BJ (cell line): ENCODE measurements at regions of chr14 and their contacts with region 1.

Region 1: GRCh38 chr14:24431569-24432258 is 2.0 kb downstream of the KHNYN start:
- DNase-seq: peak; percentile 40
- H3K4me3 ChIP-seq: peak overlapping the region; percentile 58
- H3K27me3 ChIP-seq: no peaks in the 10 kb centered on the region
- CTCF ChIP-seq: peak; percentile 96

Region 2: GRCh38 chr14:24310646-24311604 is 120.8 kb before region 1 on chr14 and contains the start of gene LTB4R:
- CTCF ChIA-PET with region 1: interaction called, 21 read pairs
- POLR2A ChIA-PET with region 1: interaction called, 3 read pairs
- DNase-seq: no peak
- H3K4me3 ChIP-seq: peak within 1 kb of the TSS; percentile 25
- H3K27me3 ChIP-seq: no peaks in the 10 kb centered on the region
- CTCF ChIP-seq: peak; percentile 33
- polyA plus RNA-seq, gene LTB4R: 2.5 and 2.6 TPM in 2 replicates

Region 3: GRCh38 chr14:24351517-24351916 is 80.2 kb before region 1 on chr14:
- CTCF ChIA-PET with region 1: interaction called, 31 read pairs
- POLR2A ChIA-PET with region 1: no interaction called
- DNase-seq: no peak
- H3K4me3 ChIP-seq: no peak overlapping the region
- H3K27me3 ChIP-seq: peaks cover 6% of the 10 kb centered on the region; the same call in 1 of the 2 replicates
- CTCF ChIP-seq: peak; percentile 18

Region 4: GRCh38 chr14:24372701-24373416 is 58.9 kb before region 1 on chr14:
- CTCF ChIA-PET with region 1: interaction called, 59 read pairs
- POLR2A ChIA-PET with region 1: no interaction called
- DNase-seq: no peak
- H3K4me3 ChIP-seq: no peak overlapping the region
- H3K27me3 ChIP-seq: no peaks in the 10 kb centered on the region
- CTCF ChIP-seq: no peak

Region 5: DNA sequence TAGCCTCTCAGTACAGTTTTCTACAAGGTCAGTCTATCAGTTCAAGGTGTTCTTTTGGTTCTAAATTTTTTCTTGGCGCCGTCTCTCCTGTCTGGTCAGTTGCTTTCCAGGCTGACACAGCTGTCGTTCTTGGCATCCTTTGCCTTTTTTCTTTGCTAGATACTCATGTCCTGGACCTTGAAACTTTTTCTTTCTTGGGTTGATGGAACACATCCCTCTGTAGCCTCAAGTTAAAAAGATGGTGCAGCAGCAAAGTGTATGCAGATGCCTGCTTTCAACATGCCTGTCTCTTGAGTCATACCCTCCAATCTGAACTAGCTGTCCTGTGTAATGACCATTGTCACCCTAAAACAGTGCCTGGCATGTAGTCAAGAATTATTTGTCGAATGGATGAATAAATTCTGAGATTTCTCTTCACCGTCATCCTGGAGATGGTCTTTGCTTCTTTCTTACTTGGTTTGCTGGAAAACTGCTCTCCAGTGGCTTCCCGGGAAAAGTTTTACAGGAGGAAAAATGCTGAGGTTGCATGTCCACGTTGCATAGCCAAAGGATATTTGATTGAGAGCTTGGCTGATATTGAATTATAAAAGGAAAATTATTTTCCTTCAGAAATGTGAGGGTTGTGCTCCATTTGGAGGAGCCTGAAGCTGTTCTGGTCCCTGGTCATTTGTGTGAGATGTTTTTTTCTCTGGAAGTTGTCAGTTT is 28.3 kb before region 1 on chr14:
- CTCF ChIA-PET with region 1: interaction called, 10 read pairs
- POLR2A ChIA-PET with region 1: no interaction called
- DNase-seq: no peak
- H3K4me3 ChIP-seq: no peak overlapping the region
- H3K27me3 ChIP-seq: no peaks in the 10 kb centered on the region; the same call in 1 of the 2 replicates
- CTCF ChIP-seq: no peak

Region 6: DNA sequence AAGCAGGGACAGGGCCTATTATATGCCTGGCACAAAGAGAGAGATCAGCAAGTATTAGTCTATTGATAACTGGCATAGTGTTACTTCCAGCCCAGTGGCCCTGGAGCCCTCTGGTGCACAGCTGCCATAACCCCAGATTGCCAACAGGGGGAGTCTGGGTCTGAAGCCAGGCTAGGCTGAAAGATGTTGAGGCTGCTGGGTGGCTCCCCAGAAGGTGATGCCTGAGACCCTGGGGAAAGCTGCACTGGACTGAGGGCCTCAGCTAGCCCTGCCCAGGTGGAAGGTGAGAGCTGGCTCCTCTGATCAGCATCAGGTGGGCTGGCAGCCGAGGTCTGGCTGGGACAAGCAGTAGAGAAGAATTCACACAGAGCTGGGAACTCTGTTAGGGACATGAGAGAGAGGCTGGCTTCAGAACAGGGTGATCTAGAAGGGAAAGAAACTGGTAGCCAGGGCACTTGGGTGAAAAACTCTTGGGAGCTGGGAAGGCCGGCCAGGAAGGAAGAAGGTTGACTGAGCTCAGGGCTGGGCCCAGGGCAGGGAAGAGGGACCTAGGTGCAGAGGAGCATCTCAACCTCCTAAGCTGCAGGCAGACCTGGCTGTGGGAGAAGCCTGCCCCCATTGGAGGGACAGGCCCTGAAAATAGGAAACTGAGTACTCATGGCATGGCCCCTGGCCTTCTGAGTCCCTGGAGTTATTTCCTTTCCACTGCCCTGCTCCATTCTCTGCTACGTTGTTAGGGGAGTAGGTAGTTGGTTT is 173.9 kb after region 1 on chr14:
- CTCF ChIA-PET with region 1: no interaction called
- POLR2A ChIA-PET with region 1: no interaction called
- DNase-seq: no peak
- H3K4me3 ChIP-seq: no peak overlapping the region
- H3K27me3 ChIP-seq: no peaks in the 10 kb centered on the region
- CTCF ChIP-seq: peak; percentile 69

Region 7: GRCh38 chr14:25463475-25463874 is 1031.8 kb after region 1 on chr14:
- CTCF ChIA-PET with region 1: no interaction called
- POLR2A ChIA-PET with region 1: no interaction called
- DNase-seq: no peak
- H3K4me3 ChIP-seq: no peak overlapping the region
- H3K27me3 ChIP-seq: no peaks in the 10 kb centered on the region
- CTCF ChIP-seq: no peak